ENCODE measurements at regions of chr14 and their contacts with region 1.

Region 1: GRCh38 chr14:99755629-99756603 is 37.3 kb upstream of the EML1 start:
- DNase-seq: peak; percentile 95 to 98
- ATAC-seq: peak; percentile 89
- H3K4me3 ChIP-seq: no peak overlapping the region
- H3K27ac ChIP-seq: no peak overlapping the region
- H3K4me1 ChIP-seq: peaks cover 0 to 3% of the 10 kb centered on the region in 2 donors
- H3K27me3 ChIP-seq: no peaks in the 10 kb centered on the region

Region 2: GRCh38 chr14:99698642-99699041 is 57.3 kb before region 1 on chr14:
- intact Hi-C with region 1: no loop called
- DNase-seq: peak in 1 of 2 donors; percentile 24
- ATAC-seq: no peak
- H3K4me3 ChIP-seq: no peak overlapping the region
- H3K27ac ChIP-seq: no peak overlapping the region
- H3K4me1 ChIP-seq: no peaks in the 10 kb centered on the region
- H3K27me3 ChIP-seq: no peaks in the 10 kb centered on the region

Region 3: GRCh38 chr14:99768381-99768780 is 12.5 kb after region 1 on chr14:
- intact Hi-C with region 1: loop called in 1 of 2 experiments (anchors 1 kb)
- DNase-seq: no peak
- ATAC-seq: no peak
- H3K4me3 ChIP-seq: no peak overlapping the region
- H3K27ac ChIP-seq: no peak overlapping the region
- H3K4me1 ChIP-seq: peaks cover 0 to 2% of the 10 kb centered on the region in 2 donors
- H3K27me3 ChIP-seq: no peaks in the 10 kb centered on the region